Left cardiac atrium (tissue), 4 donors: ENCODE measurements at regions of chr9 and their contacts with region 1.

Region 1: GRCh38 chr9:99555792-99556191 is 265.9 kb upstream of the NR4A3 start:
- DNase-seq: no peak
- ATAC-seq: no peak

Region 2: DNA sequence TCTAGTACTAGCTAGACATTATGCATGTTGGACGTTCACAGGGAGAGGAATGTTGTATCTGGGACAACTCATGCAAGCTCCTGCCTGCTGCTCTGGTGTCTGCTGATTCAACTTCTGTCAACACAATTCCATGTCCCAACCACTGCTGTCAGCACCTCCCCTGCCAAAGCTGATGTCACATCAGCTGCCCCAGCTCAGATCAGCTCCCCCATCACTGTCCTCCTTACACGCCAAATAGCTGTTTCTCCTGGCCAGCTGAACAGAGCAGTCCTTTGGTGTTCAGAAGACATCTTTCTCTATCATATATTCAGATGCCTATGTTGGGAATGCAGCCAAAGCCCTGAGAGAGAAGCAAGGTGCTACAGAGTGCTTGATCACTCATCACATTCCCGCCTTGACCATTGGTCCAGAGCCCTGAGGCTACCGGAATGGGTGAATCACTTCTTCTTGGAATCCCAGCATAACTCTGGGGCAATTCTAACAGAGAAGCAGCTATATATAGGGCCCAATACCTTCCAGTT is 110.4 kb before region 1 on chr9:
- intact Hi-C with region 1: no loop called
- DNase-seq: peak; percentile 76
- ATAC-seq: peak; percentile 96 to 97

Region 3: GRCh38 chr9:99474186-99474585 is 81.6 kb before region 1 on chr9:
- intact Hi-C with region 1: loop called in 1 of 2 experiments (anchors 10 kb)
- DNase-seq: no peak
- ATAC-seq: peak; percentile 50 to 54